ENCODE measurements at regions of chr1 and their contacts with region 1.

Region 1: GRCh38 chr1:100400404-100400803 is 48.1 kb downstream of the CDC14A start:
- DNase-seq: no peak
- H3K4me3 ChIP-seq: no peak overlapping the region
- H3K27ac ChIP-seq: no peak overlapping the region
- H3K4me1 ChIP-seq: no peaks in the 10 kb centered on the region
- H3K27me3 ChIP-seq: no peaks in the 10 kb centered on the region
- CTCF ChIP-seq: no peak

Region 2: DNA sequence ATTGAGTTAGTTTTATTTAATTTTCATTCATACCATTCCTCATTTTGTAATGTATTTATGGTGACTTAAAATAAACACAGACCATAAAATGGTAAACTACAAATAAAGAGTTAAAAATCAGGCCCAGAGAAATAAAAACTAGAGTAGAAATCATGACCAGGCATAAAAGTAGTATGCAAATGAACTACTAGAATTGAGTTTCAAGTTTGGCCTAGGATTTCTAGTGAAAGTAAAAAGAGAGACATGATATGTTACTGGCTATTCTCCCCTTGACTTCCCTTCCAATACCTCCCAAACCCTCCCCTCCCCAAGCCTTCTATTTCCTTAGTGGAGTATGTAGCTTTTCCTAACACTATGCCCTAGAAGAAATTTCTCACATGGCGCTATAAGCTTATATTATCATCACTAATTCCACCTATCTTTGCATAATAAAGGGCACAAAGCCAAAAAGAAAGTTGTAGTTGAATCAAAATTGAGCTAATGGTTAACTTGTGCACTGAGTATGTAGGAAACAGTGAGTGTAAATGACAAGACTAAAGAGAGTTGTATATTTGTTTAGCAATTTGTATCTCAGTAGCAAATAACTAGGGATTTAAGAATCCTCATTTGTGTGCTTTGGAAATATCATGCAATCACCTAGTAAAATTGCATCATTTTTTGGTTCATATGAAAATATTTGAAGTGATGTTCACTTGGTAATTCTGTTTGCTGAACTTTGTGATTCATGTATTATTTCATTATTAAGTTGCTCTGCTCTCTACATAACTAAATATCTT is 77.8 kb before region 1 on chr1:
- CTCF ChIA-PET with region 1: no interaction called
- dilution Hi-C with region 1: no loop called
- in situ Hi-C with region 1: loop called in 1 of 2 experiments (anchors 25 kb)
- intact Hi-C with region 1: no loop called
- DNase-seq: peak; percentile 30
- H3K4me3 ChIP-seq: no peak overlapping the region
- H3K27ac ChIP-seq: no peak overlapping the region
- H3K4me1 ChIP-seq: no peaks in the 10 kb centered on the region
- H3K27me3 ChIP-seq: no peaks in the 10 kb centered on the region
- CTCF ChIP-seq: no peak